ENCODE measurements at regions of chr6 and their contacts with region 1.

Region 1: GRCh38 chr6:108541838-108542759 is 18.6 kb upstream of the FOXO3 start:
- DNase-seq: peak; percentile 76 to 86
- ATAC-seq: peak; percentile 90 to 94
- H3K4me3 ChIP-seq: no peak overlapping the region
- H3K27ac ChIP-seq: peak overlapping the region; percentile 54 to 86 (median 75)
- H3K4me1 ChIP-seq: peaks cover 26 to 29% of the 10 kb centered on the region in 2 donors
- H3K27me3 ChIP-seq: no peaks in the 10 kb centered on the region
- CTCF ChIP-seq: peak; percentile 80 to 95 (median 89)
- POLR2A ChIP-seq: no peak

Region 2: DNA sequence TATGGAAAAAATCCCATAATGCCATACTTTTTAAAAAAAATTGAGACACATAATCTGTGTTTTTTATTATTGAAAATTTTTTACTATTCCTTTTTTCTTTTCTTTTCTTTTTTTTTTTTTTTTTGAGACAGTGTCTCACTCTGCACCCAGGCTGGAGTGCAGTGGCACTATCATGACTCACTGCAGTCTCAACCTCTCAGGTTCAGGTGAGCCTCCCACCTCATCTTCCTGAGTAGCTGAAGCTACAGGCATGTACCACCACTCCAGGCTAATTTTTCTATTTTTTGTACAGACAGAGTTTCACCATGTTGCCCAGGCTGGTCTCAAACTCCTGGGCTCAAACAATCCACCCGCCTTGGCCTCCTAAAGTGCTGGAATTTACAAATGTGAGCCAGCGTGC is 146.8 kb before region 1 on chr6:
- in situ Hi-C with region 1: no loop called
- intact Hi-C with region 1: no loop called
- DNase-seq: no peak
- ATAC-seq: no peak
- H3K4me3 ChIP-seq: no peak overlapping the region
- H3K27ac ChIP-seq: no peak overlapping the region
- H3K4me1 ChIP-seq: no peaks in the 10 kb centered on the region
- H3K27me3 ChIP-seq: no peaks in the 10 kb centered on the region
- CTCF ChIP-seq: no peak
- POLR2A ChIP-seq: no peak

Region 3: GRCh38 chr6:108835218-108835850 is 293.2 kb after region 1 on chr6:
- in situ Hi-C with region 1: loop called in 3 of 4 experiments (anchors 5 kb)
- intact Hi-C with region 1: loop called (anchors 1 kb)
- DNase-seq: peak; percentile 80 to 89
- ATAC-seq: peak; percentile 92 to 99
- H3K4me3 ChIP-seq: no peak overlapping the region
- H3K27ac ChIP-seq: peak overlapping the region in 3 of 4 donors; percentile 19 to 59 (median 40)
- H3K4me1 ChIP-seq: peaks cover 6% of the 10 kb centered on the region in 2 donors
- H3K27me3 ChIP-seq: no peaks in the 10 kb centered on the region
- CTCF ChIP-seq: peak; percentile 91 to 97 (median 92)
- POLR2A ChIP-seq: no peak

Region 4: GRCh38 chr6:108896111-108896661 is 354.1 kb after region 1 on chr6:
- in situ Hi-C with region 1: loop called in 3 of 4 experiments (anchors 5 to 10 kb)
- intact Hi-C with region 1: loop called (anchors 1 kb)
- DNase-seq: no peak
- ATAC-seq: no peak
- H3K4me3 ChIP-seq: no peak overlapping the region
- H3K27ac ChIP-seq: peak overlapping the region; percentile 55 to 75 (median 62)
- H3K4me1 ChIP-seq: peaks cover 31 to 37% of the 10 kb centered on the region in 2 donors
- H3K27me3 ChIP-seq: no peaks in the 10 kb centered on the region
- CTCF ChIP-seq: no peak
- POLR2A ChIP-seq: no peak

Region 5: DNA sequence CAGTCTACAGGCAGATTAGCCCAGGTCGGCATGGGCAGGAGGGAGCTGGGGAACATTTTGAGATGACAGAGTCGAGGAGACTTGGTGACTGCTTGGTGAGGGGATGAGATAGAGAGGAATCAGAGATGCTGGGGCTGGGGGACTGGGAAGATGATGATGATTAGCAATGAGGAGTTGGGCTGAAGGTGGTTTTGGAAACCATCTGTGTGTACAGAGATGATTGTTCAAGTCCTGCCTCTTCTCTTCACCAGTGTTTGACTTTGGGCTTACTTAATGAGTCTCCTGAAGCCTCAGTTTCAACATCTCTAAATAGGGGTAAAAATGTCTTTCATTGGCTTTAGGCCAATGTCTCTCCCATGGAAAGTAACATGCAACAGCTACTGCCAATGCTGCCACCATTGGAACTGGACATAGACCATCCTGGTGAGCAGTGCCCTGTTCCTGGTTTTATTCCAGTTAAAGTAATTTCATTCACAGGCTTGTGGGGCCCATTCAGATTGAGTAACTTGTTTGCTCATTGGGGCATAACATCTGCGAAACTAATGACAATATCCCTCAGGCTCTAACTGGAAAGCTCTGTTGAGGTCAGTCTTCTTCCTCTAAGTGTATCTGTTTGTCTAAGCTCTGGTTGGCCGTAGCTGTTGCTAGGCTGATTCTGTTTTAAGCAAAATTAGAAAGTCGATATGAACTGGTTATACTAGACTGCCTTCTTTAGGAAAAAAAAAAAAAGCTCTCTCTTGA is 405.2 kb after region 1 on chr6:
- in situ Hi-C with region 1: no loop called
- intact Hi-C with region 1: no loop called
- DNase-seq: no peak
- ATAC-seq: peak in 1 of 2 donors; percentile 14
- H3K4me3 ChIP-seq: no peak overlapping the region
- H3K27ac ChIP-seq: peak overlapping the region; percentile 86 to 91 (median 88)
- H3K4me1 ChIP-seq: peaks cover 66 to 68% of the 10 kb centered on the region in 2 donors
- H3K27me3 ChIP-seq: no peaks in the 10 kb centered on the region
- CTCF ChIP-seq: no peak
- POLR2A ChIP-seq: peak in 1 of 2 donors; percentile 23

Region 6: DNA sequence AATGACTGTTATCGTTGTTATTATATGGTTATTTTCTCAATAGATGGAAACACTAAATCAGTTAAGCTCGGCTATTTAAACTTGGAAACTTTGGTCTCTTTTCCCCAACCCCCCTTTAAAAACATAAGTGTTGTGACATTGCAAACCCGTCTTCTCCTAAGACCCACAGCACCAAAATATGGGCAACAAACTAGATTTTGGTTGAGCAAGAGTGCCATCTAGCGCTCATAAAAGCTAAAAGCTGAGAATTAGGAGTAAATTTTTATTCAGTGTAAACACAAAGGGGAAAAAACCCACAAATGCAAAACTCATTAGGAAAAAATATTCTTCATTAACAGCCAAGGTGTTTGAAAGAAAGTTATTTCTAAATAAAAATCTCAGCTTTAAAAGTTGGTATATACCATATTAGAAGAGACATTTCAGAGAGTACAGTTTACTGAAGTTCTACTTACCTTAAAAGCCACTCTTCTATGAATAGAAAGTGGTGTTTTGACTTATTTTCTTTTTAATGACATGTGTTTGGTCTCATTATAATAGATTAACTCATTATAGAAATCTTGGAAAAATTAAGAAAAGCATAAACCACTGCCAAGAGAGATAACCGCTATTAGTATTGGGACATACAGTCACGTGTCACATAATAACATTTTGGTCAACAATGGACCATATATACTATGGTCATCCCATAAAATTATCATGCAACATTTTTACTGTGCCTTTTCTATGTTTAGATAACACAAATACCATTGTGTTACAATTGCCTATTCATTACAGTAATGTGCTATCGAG is 531.4 kb after region 1 on chr6:
- in situ Hi-C with region 1: loop called (anchors 5 to 10 kb)
- intact Hi-C with region 1: loop called (anchors 5 kb)
- DNase-seq: peak in 1 of 2 donors; percentile 34
- ATAC-seq: peak; percentile 66 to 84
- H3K4me3 ChIP-seq: peak overlapping the region in 1 of 4 donors; percentile 4
- H3K27ac ChIP-seq: peak overlapping the region; percentile 37 to 98 (median 57)
- H3K4me1 ChIP-seq: peaks cover 82 to 94% of the 10 kb centered on the region in 2 donors
- H3K27me3 ChIP-seq: no peaks in the 10 kb centered on the region
- CTCF ChIP-seq: peak; percentile 61 to 73 (median 67)
- POLR2A ChIP-seq: no peak